Heart left ventricle (tissue), 16 donors: ENCODE measurements at regions of chr11 and their contacts with region 1.

Region 1: GRCh38 chr11:6674862-6675261 is 8.3 kb downstream of the MRPL17 start:
- DNase-seq: no peak
- ATAC-seq: peak in 3 of 4 donors; percentile 31 to 72 (median 34)
- H3K4me3 ChIP-seq: no peak overlapping the region
- H3K27ac ChIP-seq: peak overlapping the region in 9 of 12 donors; percentile 47 to 73 (median 63)
- H3K4me1 ChIP-seq: peaks cover 0 to 25% (median 2%) of the 10 kb centered on the region in 12 donors
- H3K27me3 ChIP-seq: no peaks in the 10 kb centered on the region
- CTCF ChIP-seq: no peak
- POLR2A ChIP-seq: no peak

Region 2: DNA sequence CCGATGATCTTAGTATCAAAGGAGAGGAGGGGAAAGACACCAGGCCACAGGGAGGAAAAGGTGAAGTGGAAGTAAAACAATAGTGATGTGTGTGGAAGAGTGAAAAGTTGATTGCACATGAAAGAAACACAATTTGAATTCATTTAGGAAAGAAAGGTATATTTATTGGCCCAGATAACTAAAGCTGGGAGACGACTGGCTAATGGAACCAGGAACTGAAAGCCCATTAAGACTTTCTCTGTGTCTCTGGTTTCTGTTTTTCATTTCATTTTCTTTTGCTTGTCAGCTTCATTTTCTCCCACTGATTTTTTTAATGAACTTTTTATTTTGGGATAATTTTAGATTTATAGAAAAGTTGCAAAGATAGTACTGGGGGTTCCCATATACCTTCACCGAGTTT is 14.2 kb before region 1 on chr11:
- intact Hi-C with region 1: loop called in 1 of 10 experiments (anchors 1 kb)
- DNase-seq: no peak
- ATAC-seq: no peak
- H3K4me3 ChIP-seq: no peak overlapping the region
- H3K27ac ChIP-seq: no peak overlapping the region
- H3K4me1 ChIP-seq: peaks cover 0 to 30% (median 6%) of the 10 kb centered on the region in 12 donors
- H3K27me3 ChIP-seq: no peaks in the 10 kb centered on the region
- CTCF ChIP-seq: no peak
- POLR2A ChIP-seq: no peak